A673 (cell line): ENCODE measurements at regions of chr6 and their contacts with region 1.

Region 1: DNA sequence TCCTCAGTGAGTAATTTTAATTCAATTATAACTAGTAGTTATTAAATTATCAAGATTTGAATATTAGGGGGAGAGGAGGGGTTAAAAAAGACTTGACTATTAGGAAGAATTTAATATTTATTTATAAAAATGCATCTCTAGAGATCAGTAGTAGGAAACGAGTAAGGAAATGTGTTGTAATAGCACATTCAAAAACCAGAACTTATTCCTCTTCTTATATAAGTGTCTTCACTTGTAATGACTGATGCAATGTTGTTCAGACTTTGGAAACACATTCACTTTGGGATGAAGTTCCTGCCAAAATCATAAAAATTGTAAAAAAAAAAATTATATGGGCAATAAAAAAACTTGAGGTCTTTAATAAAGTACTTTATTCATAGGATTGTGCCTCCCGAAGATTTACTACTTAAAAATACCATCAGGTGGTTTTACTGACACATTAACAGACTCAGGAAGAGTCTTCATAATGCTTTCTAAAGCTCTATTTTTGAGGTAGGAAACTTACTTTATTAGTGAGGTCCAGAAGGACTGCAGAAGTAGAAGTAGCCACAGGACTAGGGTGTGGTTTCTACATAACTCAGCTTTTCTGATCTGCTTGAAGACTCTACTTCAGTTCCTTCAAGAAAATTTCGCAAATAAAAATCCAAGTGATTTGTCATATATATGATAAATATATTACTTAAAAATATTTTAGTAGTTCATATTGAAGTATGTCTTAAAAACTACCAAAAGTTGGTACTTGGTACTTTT is 59.8 kb downstream of the CCDC170 start:
- DNase-seq: no peak
- H3K4me3 ChIP-seq: no peak overlapping the region
- H3K27ac ChIP-seq: no peak overlapping the region
- H3K4me1 ChIP-seq: no peaks in the 10 kb centered on the region
- H3K27me3 ChIP-seq: no peaks in the 10 kb centered on the region
- CTCF ChIP-seq: no peak

Region 2: DNA sequence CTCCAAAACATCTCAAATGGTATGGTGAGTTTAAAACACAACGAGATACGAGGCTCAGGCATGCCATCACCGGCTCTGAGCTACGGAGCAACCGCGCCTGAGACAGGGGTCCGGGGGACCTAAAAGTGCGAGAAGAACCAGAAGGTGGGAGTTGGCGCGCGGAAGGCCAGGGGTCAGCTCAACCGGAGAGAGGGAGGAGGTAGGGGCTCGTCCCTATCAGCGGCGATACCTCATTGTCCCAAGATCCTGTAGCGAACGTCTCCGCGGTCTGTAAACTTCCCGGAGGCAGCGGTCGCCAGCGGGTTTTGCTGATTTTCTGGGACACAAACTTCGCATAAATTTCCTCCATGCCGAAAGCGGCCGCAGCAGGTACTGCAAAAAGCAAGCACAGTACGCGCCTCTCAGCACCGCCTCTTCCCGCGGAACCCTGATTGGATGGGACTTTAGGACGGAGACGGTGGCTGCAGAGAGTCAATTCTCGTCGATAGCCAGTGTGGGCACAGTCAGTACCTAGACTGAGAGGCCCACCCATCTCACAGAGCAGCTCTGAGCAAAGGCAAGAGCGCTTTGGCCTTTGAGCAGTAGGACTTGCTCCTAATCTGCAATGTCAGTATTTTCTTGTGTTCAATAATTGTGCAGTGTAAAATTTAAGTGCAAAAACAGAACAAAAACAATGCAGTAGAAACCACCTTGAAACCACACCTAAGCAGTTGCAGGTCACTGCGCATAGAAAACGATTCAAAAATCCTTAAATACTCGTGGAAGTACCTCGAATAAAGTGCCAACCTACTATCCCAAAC is 1807.2 kb before region 1 on chr6 and contains the start of gene NUP43:
- CTCF ChIA-PET with region 1: no interaction called
- POLR2A ChIA-PET with region 1: no interaction called
- intact Hi-C with region 1: no loop called
- DNase-seq: peak; percentile 97
- H3K4me3 ChIP-seq: peak within 1 kb of the TSS; percentile 75
- H3K27ac ChIP-seq: peak within 1 kb of the TSS; percentile 81
- H3K4me1 ChIP-seq: peaks cover 13% of the 10 kb centered on the region
- H3K27me3 ChIP-seq: no peaks in the 10 kb centered on the region
- CTCF ChIP-seq: peak; percentile 56; the same call in 1 of the 2 replicates
- total RNA-seq, gene NUP43: 87.0 and 88.5 TPM in 2 replicates

Region 3: DNA sequence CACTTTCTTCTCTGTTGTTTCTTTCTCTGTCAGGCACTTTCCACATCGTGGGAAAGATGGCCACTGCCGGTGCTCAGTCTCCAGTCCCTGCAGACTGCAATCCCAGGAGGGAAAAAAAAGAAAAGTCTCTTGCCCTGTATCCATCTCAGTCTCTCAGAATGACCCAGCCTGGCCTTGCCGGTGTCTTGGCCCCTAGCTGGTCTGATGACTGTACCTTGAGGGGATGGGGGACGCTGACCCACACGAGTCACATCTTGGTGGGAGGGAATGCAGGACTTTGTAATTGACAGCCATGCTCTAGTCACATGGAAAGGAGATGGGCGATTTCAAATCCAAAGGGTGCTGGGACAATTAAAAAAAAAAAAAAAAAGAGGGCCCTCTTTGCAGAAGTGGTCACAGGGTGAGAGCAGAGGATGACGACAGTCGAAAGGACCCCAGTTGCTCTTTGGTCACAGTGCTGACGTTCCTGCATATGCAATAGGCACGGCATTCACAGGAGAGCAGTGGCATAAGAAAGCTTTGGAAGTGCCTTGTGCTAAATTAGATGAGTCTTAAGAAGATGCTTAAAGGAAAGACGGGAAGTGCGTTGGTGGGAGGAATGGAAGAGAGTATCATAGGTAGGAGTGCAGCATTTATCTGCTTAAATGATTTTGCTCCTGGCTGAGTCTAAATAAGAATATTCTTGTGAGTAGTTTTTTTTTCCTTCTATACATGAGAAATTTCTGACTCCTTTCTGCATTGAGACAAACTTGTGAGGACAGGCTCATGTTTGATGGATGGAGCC is 377.7 kb before region 1 on chr6:
- CTCF ChIA-PET with region 1: no interaction called
- POLR2A ChIA-PET with region 1: no interaction called
- intact Hi-C with region 1: no loop called
- DNase-seq: no peak
- H3K4me3 ChIP-seq: no peak overlapping the region
- H3K27ac ChIP-seq: no peak overlapping the region
- H3K4me1 ChIP-seq: no peaks in the 10 kb centered on the region
- H3K27me3 ChIP-seq: no peaks in the 10 kb centered on the region
- CTCF ChIP-seq: no peak

Region 4: DNA sequence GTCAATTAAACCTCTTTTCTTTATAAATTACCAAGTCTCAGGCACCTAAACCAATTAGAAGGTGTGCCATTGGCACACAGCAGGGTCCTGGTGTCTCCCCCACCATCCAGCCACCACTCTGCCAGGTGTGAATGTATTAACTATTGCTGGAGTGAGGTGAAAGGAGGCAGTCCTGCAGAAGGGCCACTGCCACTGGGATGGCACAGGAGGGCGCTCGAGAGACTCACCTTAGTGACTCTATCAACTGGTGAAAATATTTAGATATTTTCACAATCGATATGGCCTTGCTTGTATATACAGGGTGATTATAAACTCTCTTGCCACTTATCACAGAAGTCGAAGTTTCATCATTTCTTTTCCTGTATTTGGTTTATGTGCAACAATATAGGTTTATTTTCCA is 108.3 kb after region 1 on chr6:
- CTCF ChIA-PET with region 1: no interaction called
- POLR2A ChIA-PET with region 1: interaction called, 20 read pairs
- intact Hi-C with region 1: no loop called
- DNase-seq: no peak
- H3K4me3 ChIP-seq: no peak overlapping the region
- H3K27ac ChIP-seq: no peak overlapping the region
- H3K4me1 ChIP-seq: no peaks in the 10 kb centered on the region
- H3K27me3 ChIP-seq: peaks cover 6% of the 10 kb centered on the region
- CTCF ChIP-seq: peak; percentile 50

Region 5: DNA sequence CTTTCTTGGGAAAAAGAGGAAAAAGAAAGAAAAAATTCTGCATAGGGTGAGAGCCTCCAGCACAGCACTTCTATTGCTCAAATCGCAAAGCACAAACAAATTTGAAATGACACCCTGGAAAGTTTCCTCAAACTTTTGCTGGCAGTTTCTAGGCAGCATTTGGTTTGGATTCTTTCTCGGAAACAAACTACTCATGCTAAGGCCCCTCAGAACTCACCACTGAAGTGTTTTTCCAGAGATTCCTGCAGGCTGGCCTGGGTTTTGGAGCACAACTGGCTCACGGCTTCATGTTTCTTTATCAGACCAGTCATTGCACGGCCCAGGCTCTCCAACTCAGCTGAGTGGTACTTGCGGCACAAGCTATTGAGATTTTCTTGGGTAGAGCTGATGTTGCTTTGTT is 845.8 kb after region 1 on chr6:
- CTCF ChIA-PET with region 1: no interaction called
- POLR2A ChIA-PET with region 1: no interaction called
- intact Hi-C with region 1: no loop called
- DNase-seq: no peak
- H3K4me3 ChIP-seq: no peak overlapping the region
- H3K27ac ChIP-seq: no peak overlapping the region
- H3K4me1 ChIP-seq: no peaks in the 10 kb centered on the region
- H3K27me3 ChIP-seq: no peaks in the 10 kb centered on the region
- CTCF ChIP-seq: no peak